Naive thymus-derived CD4-positive, alpha-beta T cell (primary cell): ENCODE measurements at regions of chr10 and their contacts with region 1.

Region 1: GRCh38 chr10:80187465-80188409 is 17.6 kb downstream of the ANXA11 start:
- DNase-seq: peak; percentile 58 to 96 (median 93)
- ATAC-seq: peak; percentile 94
- H3K4me3 ChIP-seq: peak overlapping the region; percentile 37
- H3K4me3 Mint-ChIP-seq: peak overlapping the region; percentile 77 to 95 (median 85)
- H3K27ac ChIP-seq: peak overlapping the region; percentile 84
- H3K27ac Mint-ChIP-seq: peak overlapping the region; percentile 90 to 98 (median 93)
- H3K4me1 ChIP-seq: peaks cover 48 to 81% of the 10 kb centered on the region in 2 donors
- H3K4me1 Mint-ChIP-seq: peaks cover 74 to 91% (median 90%) of the 10 kb centered on the region in 7 donors
- H3K27me3 ChIP-seq: no peaks in the 10 kb centered on the region
- H3K27me3 Mint-ChIP-seq: no peaks in the 10 kb centered on the region

Region 2: GRCh38 chr10:80078448-80079311 is 109.1 kb before region 1 on chr10 and contains the start of gene TMEM254:
- CTCF ChIA-PET with region 1: no interaction called
- POLR2A ChIA-PET with region 1: interaction called, 4 read pairs
- intact Hi-C with region 1: loop called (anchors 1 kb)
- DNase-seq: peak; percentile 79 to 87 (median 85)
- ATAC-seq: peak; percentile 87
- H3K4me3 ChIP-seq: peak within 1 kb of the TSS; percentile 88
- H3K4me3 Mint-ChIP-seq: peak within 1 kb of the TSS; percentile 90 to 100 (median 96)
- H3K27ac ChIP-seq: peak within 1 kb of the TSS; percentile 87
- H3K27ac Mint-ChIP-seq: peak within 1 kb of the TSS; percentile 88 to 99 (median 95)
- H3K4me1 ChIP-seq: peaks cover 6 to 12% of the 10 kb centered on the region in 2 donors
- H3K4me1 Mint-ChIP-seq: peaks cover 14 to 25% (median 20%) of the 10 kb centered on the region in 7 donors
- H3K27me3 ChIP-seq: no peaks in the 10 kb centered on the region
- H3K27me3 Mint-ChIP-seq: no peaks in the 10 kb centered on the region
- total RNA-seq, gene TMEM254: 7.3 to 19.6 (median 17.1) TPM

Region 3: GRCh38 chr10:80459047-80459931 is 271.6 kb after region 1 on chr10:
- CTCF ChIA-PET with region 1: no interaction called
- POLR2A ChIA-PET with region 1: interaction called, 3 read pairs
- intact Hi-C with region 1: loop called in 1 of 2 experiments (anchors 5 kb)
- DNase-seq: peak in 7 of 9 donors; percentile 53 to 66 (median 55)
- ATAC-seq: peak; percentile 66
- H3K4me3 ChIP-seq: peak overlapping the region; percentile 87
- H3K4me3 Mint-ChIP-seq: peak overlapping the region; percentile 79 to 99 (median 98)
- H3K27ac ChIP-seq: peak overlapping the region; percentile 84
- H3K27ac Mint-ChIP-seq: peak overlapping the region; percentile 87 to 99 (median 98)
- H3K4me1 ChIP-seq: peaks cover 75 to 79% of the 10 kb centered on the region in 2 donors
- H3K4me1 Mint-ChIP-seq: peaks cover 77 to 85% (median 83%) of the 10 kb centered on the region in 7 donors
- H3K27me3 ChIP-seq: no peaks in the 10 kb centered on the region
- H3K27me3 Mint-ChIP-seq: no peaks in the 10 kb centered on the region